Tibial artery (tissue), 4 donors: ENCODE measurements at regions of chr2 and their contacts with region 1.

Region 1: GRCh38 chr2:10408649-10409579 is 39.2 kb downstream of the ODC1 start:
- DNase-seq: peak; percentile 52 to 83
- H3K4me3 ChIP-seq: no peak overlapping the region
- H3K27ac ChIP-seq: peak overlapping the region; percentile 1 to 20
- H3K4me1 ChIP-seq: peaks cover 10 to 65% (median 55%) of the 10 kb centered on the region in 4 donors
- H3K27me3 ChIP-seq: no peaks in the 10 kb centered on the region
- CTCF ChIP-seq: peak; percentile 90 to 94

Region 2: GRCh38 chr2:10122386-10123280 is 286.3 kb before region 1 on chr2 and contains the start of gene RRM2:
- intact Hi-C with region 1: loop called (anchors 5 kb)
- DNase-seq: peak; percentile 90 to 94
- H3K4me3 ChIP-seq: peak within 1 kb of the TSS; percentile 48 to 73
- H3K27ac ChIP-seq: no peak within 1 kb of the TSS
- H3K4me1 ChIP-seq: peaks cover 0 to 38% (median 26%) of the 10 kb centered on the region in 4 donors
- H3K27me3 ChIP-seq: peaks cover 0 to 19% of the 10 kb centered on the region in 2 donors
- CTCF ChIP-seq: no peak

Region 3: DNA sequence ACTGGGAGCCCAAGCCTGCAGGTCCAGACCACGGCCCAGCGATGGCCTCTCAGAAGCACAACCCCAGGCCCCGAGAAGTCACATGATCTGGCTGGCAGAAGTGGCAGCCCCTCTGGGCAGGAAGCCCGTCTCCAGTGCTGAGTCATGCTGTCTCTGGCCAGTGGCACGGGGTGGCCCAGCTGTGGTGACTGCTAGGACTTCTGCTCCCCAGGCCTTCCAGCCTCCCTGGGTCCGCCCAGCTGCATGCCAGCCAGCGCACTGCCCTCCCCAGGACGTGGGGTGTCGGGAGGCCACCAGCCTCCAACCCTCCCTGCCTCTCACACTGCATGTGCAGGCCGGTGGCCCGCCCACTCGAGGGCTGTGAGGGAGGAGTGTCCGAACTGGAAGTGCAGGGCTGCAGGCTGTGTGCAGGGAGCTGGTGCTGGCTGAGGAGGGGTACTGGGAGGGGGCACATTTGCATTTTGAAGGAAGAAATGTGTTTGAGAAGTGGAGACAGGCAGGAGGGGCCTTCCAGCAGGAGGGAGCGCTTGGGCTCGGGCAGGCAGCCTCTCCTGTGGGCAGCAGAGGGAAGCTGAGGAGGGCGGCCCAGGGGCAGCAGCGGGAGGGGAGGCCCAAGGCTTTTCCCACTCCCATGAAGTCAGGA is 123.2 kb before region 1 on chr2:
- intact Hi-C with region 1: loop called (anchors 5 kb)
- DNase-seq: peak; percentile 80 to 97
- H3K4me3 ChIP-seq: no peak overlapping the region
- H3K27ac ChIP-seq: peak overlapping the region; percentile 73 to 89
- H3K4me1 ChIP-seq: peaks cover 7 to 36% (median 19%) of the 10 kb centered on the region in 4 donors
- H3K27me3 ChIP-seq: no peaks in the 10 kb centered on the region
- CTCF ChIP-seq: no peak

Region 4: GRCh38 chr2:10302479-10303180 is 106.3 kb before region 1 on chr2 and contains the start of gene HPCAL1:
- intact Hi-C with region 1: loop called (anchors 2 kb)
- DNase-seq: peak; percentile 73 to 89
- H3K4me3 ChIP-seq: peak within 1 kb of the TSS; percentile 76 to 94
- H3K27ac ChIP-seq: peak within 1 kb of the TSS; percentile 74 to 77
- H3K4me1 ChIP-seq: peaks cover 0 to 30% (median 20%) of the 10 kb centered on the region in 4 donors
- H3K27me3 ChIP-seq: no peaks in the 10 kb centered on the region
- CTCF ChIP-seq: peak; percentile 49 to 51

Region 5: DNA sequence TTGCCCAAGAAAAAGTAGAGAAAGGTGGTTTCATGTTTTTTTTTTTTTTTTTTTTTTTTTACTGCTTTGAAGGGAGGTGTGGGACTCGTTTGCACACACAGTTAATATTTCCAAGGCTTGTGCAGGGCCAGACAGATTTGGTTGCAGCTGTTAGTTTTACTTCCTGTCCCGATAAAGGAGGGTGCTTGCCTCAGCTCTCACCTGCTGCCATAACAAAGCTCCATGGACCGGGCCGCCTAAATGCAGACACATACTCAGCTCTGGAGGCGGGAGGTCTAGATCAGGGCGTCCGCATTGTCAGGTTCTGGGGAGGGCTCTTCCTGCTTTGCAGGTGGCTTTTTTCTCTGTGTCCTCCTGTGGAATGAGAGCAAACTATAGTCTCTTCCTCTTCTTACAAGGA is 30.7 kb before region 1 on chr2:
- intact Hi-C with region 1: no loop called
- DNase-seq: no peak
- H3K4me3 ChIP-seq: no peak overlapping the region
- H3K27ac ChIP-seq: no peak overlapping the region
- H3K4me1 ChIP-seq: no peaks in the 10 kb centered on the region
- H3K27me3 ChIP-seq: no peaks in the 10 kb centered on the region
- CTCF ChIP-seq: no peak

Region 6: GRCh38 chr2:10520154-10520553 is 111.2 kb after region 1 on chr2:
- intact Hi-C with region 1: no loop called
- DNase-seq: peak in 1 of 2 donors; percentile 34
- H3K4me3 ChIP-seq: no peak overlapping the region
- H3K27ac ChIP-seq: no peak overlapping the region
- H3K4me1 ChIP-seq: no peaks in the 10 kb centered on the region
- H3K27me3 ChIP-seq: peaks cover 0 to 6% of the 10 kb centered on the region in 2 donors
- CTCF ChIP-seq: no peak